Activated naive CD4-positive, alpha-beta T cell treated with anti-CD3 and anti-CD28 coated beads for 36 hours (primary cell): ENCODE measurements at regions of chr16 and their contacts with region 1.

Region 1: GRCh38 chr16:50152807-50153452 is at the start of gene TENT4B:
- DNase-seq: peak; percentile 85
- H3K4me3 Mint-ChIP-seq: peak within 1 kb of the TSS; percentile 80
- H3K27ac Mint-ChIP-seq: peak within 1 kb of the TSS; percentile 93
- H3K4me1 Mint-ChIP-seq: peaks cover 34% of the 10 kb centered on the region
- H3K27me3 Mint-ChIP-seq: no peaks in the 10 kb centered on the region
- total RNA-seq, gene TENT4B: 17.9 to 18.4 TPM

Region 2: GRCh38 chr16:49855280-49855821 is 297.6 kb before region 1 on chr16:
- CTCF ChIA-PET with region 1: no interaction called
- intact Hi-C with region 1: loop called (anchors 5 kb)
- DNase-seq: peak; percentile 69
- H3K4me3 Mint-ChIP-seq: peak overlapping the region; percentile 58
- H3K27ac Mint-ChIP-seq: no peak overlapping the region
- H3K4me1 Mint-ChIP-seq: peaks cover 10% of the 10 kb centered on the region
- H3K27me3 Mint-ChIP-seq: peaks cover 40% of the 10 kb centered on the region

Region 3: DNA sequence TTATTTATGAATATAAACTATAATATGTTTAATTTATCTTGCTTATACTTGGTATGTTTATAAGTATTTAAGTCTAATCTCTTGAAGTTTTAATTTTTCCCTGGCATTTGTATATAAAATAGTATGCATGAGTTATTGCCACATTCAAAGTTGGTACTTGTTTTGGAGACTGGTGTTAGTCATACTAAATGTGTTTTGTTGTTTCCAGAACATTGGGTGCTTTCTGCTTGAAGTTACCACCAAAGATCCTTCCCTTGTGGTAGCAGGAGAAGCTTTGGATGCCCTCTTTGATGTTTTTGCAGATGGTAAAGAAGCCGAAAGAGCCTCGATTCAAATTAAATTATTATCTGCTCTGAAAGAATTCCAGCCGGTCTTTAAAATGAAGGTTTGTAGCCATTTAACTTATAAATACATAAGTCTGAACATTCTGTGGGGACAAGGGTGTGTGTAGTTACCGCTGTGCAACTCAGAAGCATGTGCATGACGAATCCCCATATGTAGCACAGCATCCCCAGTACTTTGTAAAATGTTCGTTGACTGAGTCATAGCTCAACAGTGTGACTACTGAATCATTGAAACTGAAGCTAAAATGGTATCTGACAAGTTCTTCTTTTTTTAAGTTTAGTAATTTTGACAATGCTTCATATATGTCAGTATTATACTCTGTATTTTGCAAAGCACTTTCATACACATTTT is 50.7 kb before region 1 on chr16:
- CTCF ChIA-PET with region 1: no interaction called
- intact Hi-C with region 1: loop called (anchors 1 kb)
- DNase-seq: peak; percentile 36
- H3K4me3 Mint-ChIP-seq: no peak overlapping the region
- H3K27ac Mint-ChIP-seq: peak overlapping the region; percentile 35
- H3K4me1 Mint-ChIP-seq: peaks cover 8% of the 10 kb centered on the region
- H3K27me3 Mint-ChIP-seq: no peaks in the 10 kb centered on the region

Region 4: GRCh38 chr16:50172195-50172922 is 19.4 kb after region 1 on chr16:
- CTCF ChIA-PET with region 1: no interaction called
- intact Hi-C with region 1: loop called (anchors 1 kb)
- DNase-seq: no peak
- H3K4me3 Mint-ChIP-seq: no peak overlapping the region
- H3K27ac Mint-ChIP-seq: peak overlapping the region; percentile 71
- H3K4me1 Mint-ChIP-seq: peaks cover 74% of the 10 kb centered on the region
- H3K27me3 Mint-ChIP-seq: no peaks in the 10 kb centered on the region

Region 5: DNA sequence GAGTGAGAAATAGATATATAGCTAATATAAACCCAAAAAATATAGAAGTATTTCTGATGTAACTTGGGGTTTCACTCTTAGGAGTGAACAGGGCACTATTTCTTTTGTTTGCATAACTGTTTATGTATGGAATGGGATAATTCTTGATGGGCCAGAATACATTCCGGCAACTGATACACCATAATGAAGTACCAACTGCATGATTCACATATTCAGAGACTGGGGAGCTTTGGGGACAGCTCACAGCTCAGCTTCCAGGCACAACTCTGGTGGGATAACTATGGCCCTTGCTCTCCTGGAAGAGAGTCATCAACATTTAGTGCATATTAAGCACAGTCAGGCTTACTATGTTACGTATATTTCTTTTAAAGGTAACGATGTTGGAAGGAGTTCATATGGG is 71.4 kb after region 1 on chr16:
- CTCF ChIA-PET with region 1: no interaction called
- intact Hi-C with region 1: no loop called
- DNase-seq: no peak
- H3K4me3 Mint-ChIP-seq: no peak overlapping the region
- H3K27ac Mint-ChIP-seq: no peak overlapping the region
- H3K4me1 Mint-ChIP-seq: no peaks in the 10 kb centered on the region
- H3K27me3 Mint-ChIP-seq: no peaks in the 10 kb centered on the region

Region 6: DNA sequence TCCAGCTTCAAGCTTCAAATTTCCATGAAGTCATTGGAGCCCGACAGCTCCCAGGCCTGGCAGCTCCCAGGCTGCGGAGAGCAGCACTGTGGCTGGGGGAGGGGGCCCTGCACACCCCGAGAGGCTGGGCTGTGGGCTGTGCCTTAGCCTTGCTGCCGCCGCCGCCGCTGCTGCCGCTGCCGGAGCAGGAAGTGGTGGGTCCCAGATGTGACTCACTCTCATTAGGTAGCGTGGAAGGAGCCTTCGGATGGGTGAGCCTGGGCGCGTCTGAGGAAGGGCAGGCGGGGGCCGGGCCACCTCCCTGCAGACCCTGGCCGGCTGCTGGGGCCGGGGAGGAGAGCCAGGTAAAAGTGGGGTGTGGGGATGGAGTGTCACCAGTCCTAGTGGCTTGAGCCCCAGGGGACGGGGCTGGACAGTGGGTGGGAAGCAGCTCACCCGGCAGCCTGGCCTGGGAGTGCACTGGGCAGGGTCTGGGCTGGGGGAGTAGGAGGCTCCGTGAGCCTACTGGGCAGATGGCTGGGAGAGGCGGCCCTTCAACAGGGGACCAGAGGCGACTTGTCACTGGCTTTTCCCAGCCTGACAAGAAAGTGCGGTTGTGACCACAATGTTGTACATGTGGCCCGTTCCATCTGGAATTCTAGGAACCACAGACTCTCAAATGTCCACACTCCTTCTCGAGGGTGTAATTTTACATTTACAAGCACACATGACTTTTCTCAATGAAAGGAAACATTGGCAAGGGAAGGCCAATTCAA is 113.6 kb after region 1 on chr16 and contains the start of gene ADCY7:
- CTCF ChIA-PET with region 1: no interaction called
- intact Hi-C with region 1: loop called (anchors 2 kb)
- DNase-seq: peak; percentile 91
- H3K4me3 Mint-ChIP-seq: peak within 1 kb of the TSS; percentile 86
- H3K27ac Mint-ChIP-seq: peak within 1 kb of the TSS; percentile 94
- H3K4me1 Mint-ChIP-seq: peaks cover 60% of the 10 kb centered on the region
- H3K27me3 Mint-ChIP-seq: peaks cover 3% of the 10 kb centered on the region
- total RNA-seq, gene ADCY7: 73.4 to 89.6 TPM

Region 7: GRCh38 chr16:50765260-50765659 is 612.3 kb after region 1 on chr16:
- CTCF ChIA-PET with region 1: no interaction called
- intact Hi-C with region 1: loop called (anchors 5 kb)
- DNase-seq: peak; percentile 23
- H3K4me3 Mint-ChIP-seq: peak overlapping the region; percentile 14
- H3K27ac Mint-ChIP-seq: peak overlapping the region; percentile 79
- H3K4me1 Mint-ChIP-seq: peaks cover 89% of the 10 kb centered on the region
- H3K27me3 Mint-ChIP-seq: no peaks in the 10 kb centered on the region